Activated naive CD4-positive, alpha-beta T cell treated with anti-CD3 and anti-CD28 coated beads for 36 hours (primary cell): ENCODE measurements at regions of chr6 and their contacts with region 1.

Region 1: DNA sequence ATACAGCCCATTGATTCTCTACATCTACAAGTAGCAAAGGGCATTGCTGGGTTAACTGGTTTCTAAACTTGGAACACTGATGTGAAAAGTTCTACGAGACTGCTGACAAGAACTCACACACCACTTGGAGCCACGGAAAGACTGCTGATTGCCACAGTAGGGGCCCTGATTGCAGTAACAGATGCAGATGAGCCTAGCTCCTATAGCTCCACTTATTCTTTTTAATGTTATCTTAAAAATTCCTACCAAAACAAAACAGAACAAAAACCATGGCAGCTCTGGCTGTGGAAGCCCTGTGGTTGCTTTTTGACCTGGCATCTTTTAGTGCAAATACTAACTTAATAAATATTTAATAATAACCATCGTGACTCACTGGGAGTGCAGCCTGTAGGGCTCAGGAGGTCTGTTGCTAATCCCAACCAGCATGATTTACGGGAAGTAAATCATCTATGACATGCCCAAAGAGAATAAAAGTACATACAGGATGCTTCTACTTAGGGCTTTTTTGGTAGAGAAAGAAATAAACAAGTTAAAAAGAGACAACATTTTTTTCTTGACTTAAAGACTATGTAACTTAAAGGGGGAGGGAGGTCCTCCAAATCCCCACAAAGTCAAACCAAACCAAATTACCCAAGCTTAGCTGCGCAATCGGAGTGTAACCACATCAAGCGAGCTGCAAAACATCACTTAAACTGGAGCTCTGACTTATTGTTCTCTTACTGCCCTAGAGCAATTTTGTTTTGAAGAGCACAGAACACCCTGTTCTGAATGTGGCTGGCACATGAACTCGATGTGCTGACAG is 87.2 kb downstream of the FKBP5 start:
- DNase-seq: peak; percentile 78
- H3K4me3 Mint-ChIP-seq: peak overlapping the region; percentile 58
- H3K27ac Mint-ChIP-seq: peak overlapping the region; percentile 80
- H3K4me1 Mint-ChIP-seq: peaks cover 79% of the 10 kb centered on the region
- H3K27me3 Mint-ChIP-seq: no peaks in the 10 kb centered on the region

Region 2: GRCh38 chr6:35161776-35162607 is 439.5 kb before region 1 on chr6:
- CTCF ChIA-PET with region 1: no interaction called
- intact Hi-C with region 1: no loop called
- DNase-seq: no peak
- H3K4me3 Mint-ChIP-seq: no peak overlapping the region
- H3K27ac Mint-ChIP-seq: no peak overlapping the region
- H3K4me1 Mint-ChIP-seq: no peaks in the 10 kb centered on the region
- H3K27me3 Mint-ChIP-seq: peaks cover 2% of the 10 kb centered on the region

Region 3: DNA sequence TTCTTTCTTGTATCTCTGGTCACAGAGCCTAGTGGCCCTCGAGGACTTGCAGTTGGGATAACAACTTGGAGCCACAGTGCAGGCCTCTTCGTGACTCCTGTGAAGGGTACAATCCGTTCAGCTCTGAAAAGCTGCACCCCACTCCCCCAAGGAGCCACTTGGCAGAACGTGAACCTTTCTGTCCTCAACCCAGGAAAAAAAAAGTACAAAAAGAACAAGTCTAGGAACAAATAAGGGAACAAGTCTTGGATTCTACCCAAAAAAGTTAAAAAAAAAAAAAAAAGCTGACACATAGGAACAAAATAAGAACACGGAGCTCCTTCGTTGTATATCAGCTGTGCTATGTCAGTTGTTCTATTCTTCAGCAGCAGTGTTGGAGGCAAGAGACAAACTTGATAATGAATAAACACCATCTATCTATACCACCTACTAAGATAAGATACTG is 10.9 kb before region 1 on chr6:
- CTCF ChIA-PET with region 1: interaction called, 13 read pairs
- intact Hi-C with region 1: no loop called
- DNase-seq: no peak
- H3K4me3 Mint-ChIP-seq: no peak overlapping the region
- H3K27ac Mint-ChIP-seq: peak overlapping the region; percentile 39
- H3K4me1 Mint-ChIP-seq: peaks cover 90% of the 10 kb centered on the region
- H3K27me3 Mint-ChIP-seq: no peaks in the 10 kb centered on the region

Region 4: DNA sequence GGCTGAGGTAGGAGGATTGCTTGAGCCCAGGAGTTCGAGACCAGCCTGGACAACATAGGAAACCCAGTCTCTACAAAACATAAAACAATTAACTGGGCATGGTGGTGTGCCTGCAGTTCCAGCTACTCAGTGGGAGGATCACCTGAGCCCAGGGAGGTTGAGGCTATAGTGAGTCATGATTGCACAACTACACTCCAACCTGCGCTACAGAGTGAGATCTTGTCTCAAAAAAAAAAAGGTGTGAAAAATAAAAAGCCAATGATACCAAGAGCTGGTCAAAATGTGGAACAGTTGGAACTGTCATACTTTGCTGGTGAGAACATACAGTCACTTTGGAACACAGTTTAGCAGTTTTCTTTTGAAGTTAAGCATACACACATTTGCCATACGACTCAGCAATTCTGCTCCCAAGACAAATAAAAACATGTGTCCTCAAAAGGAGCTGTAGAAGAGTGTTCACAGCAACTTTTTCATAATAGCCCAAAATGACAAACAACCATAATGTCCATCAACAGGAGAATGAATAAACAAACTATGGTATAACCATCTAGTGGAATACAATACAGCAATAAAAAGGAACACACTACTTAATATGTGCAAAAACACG is 108.8 kb after region 1 on chr6:
- CTCF ChIA-PET with region 1: interaction called, 3 read pairs
- intact Hi-C with region 1: loop called (anchors 1 kb)
- DNase-seq: peak; percentile 79
- H3K4me3 Mint-ChIP-seq: no peak overlapping the region
- H3K27ac Mint-ChIP-seq: peak overlapping the region; percentile 75
- H3K4me1 Mint-ChIP-seq: peaks cover 30% of the 10 kb centered on the region
- H3K27me3 Mint-ChIP-seq: no peaks in the 10 kb centered on the region